ENCODE measurements at regions of chr1 and their contacts with region 1.

Region 1: DNA sequence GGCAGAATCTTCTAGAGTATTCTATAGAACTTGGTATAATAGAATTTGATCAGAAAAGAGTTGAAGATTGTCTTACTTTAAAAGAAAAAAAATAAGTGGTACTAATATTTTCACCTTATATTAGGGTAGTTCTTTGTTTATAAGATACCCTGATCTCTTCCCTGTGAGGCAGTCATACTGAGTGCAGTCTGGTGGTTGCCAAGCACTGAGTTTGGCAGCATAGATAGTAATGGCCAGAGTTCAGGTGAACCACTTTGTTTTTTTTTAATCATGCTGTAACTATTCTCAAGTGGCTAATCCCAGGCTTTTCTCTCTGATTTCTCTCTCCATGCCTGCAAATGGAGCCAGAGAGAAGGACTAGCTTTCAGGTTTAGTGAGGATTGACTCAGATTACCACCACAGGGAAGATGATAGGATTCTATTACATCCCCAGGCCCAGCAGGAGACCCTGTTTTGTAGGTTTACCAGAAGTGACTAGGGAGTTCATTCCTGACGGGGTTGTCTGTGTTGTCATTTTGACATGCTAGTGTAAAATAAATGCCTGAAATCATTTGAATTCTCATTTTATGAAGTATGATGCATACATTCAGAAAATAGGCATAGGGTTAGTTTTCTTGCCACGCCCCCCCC is 16.7 kb downstream of the KDM1A start:
- DNase-seq: no peak
- ATAC-seq: no peak
- H3K4me3 ChIP-seq: no peak overlapping the region
- H3K27ac ChIP-seq: no peak overlapping the region
- H3K4me1 ChIP-seq: peaks cover 34% of the 10 kb centered on the region
- H3K27me3 ChIP-seq: no peaks in the 10 kb centered on the region
- CTCF ChIP-seq: no peak
- EP300 ChIP-seq: no peak
- POLR2A ChIP-seq: no peak
- RAD21 ChIP-seq: no peak

Region 2: GRCh38 chr1:23019094-23019862 is 16.7 kb before region 1 on chr1 and contains the start of gene KDM1A:
- CTCF ChIA-PET with region 1: interaction called, 9 read pairs
- POLR2A ChIA-PET with region 1: interaction called, 9 read pairs
- RAD21 ChIA-PET with region 1: interaction called, 22 read pairs
- SMC1A ChIA-PET with region 1: interaction called, 17 read pairs
- in situ Hi-C with region 1: no loop called
- intact Hi-C with region 1: no loop called
- DNase-seq: peak; percentile 90
- ATAC-seq: peak; percentile 97
- H3K4me3 ChIP-seq: peak within 1 kb of the TSS; percentile 69
- H3K27ac ChIP-seq: peak within 1 kb of the TSS; percentile 71
- H3K4me1 ChIP-seq: 0 out of 2 replicates have a peak, but pooled peaks cover 3% of the 10 kb centered on the region
- H3K27me3 ChIP-seq: no peaks in the 10 kb centered on the region
- CTCF ChIP-seq: peak; percentile 24 to 48 (median 25); a peak in 4 of 6 replicates
- EP300 ChIP-seq: peak; percentile 57 to 63; a peak in 3 of 4 replicates
- POLR2A ChIP-seq: peak; percentile 90
- RAD21 ChIP-seq: no peak
- polyA plus RNA-seq, gene KDM1A: 39.2 to 59.5 TPM